BJ (cell line): ENCODE measurements at regions of chr18 and their contacts with region 1.

Region 1: GRCh38 chr18:24488824-24489493 is 28.5 kb downstream of the HRH4 start:
- DNase-seq: no peak
- H3K4me3 ChIP-seq: no peak overlapping the region
- H3K27me3 ChIP-seq: no peaks in the 10 kb centered on the region
- CTCF ChIP-seq: peak; percentile 70

Region 2: GRCh38 chr18:24176727-24177416 is 312.1 kb before region 1 on chr18:
- CTCF ChIA-PET with region 1: interaction called, 12 read pairs
- POLR2A ChIA-PET with region 1: no interaction called
- DNase-seq: no peak
- H3K4me3 ChIP-seq: no peak overlapping the region
- H3K27me3 ChIP-seq: no peaks in the 10 kb centered on the region
- CTCF ChIP-seq: peak; percentile 85

Region 3: DNA sequence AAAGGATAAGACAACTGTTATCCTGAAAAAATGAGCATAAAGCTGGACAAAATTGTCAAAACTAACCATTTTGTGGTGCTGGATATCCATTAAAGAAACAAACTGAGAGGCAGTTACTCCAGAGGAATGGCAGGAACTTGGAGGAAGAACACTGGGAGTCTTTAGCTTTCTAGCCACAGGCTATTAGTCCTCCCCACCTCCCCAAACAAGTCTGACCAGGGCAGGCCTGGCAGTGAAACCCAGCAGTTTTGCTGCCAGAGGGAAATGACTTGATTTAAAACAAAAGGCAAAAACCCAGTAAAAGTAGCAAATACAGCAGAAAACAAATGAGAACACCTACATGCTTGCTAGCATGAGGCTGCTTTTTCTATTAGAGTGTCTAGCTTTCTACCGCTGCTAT is 126.2 kb before region 1 on chr18:
- CTCF ChIA-PET with region 1: interaction called, 89 read pairs
- POLR2A ChIA-PET with region 1: no interaction called
- DNase-seq: no peak
- H3K4me3 ChIP-seq: no peak overlapping the region
- H3K27me3 ChIP-seq: no peaks in the 10 kb centered on the region
- CTCF ChIP-seq: no peak

Region 4: GRCh38 chr18:24460388-24460787 is 28.6 kb before region 1 on chr18 and contains the start of gene HRH4:
- CTCF ChIA-PET with region 1: interaction called, 11 read pairs
- POLR2A ChIA-PET with region 1: no interaction called
- DNase-seq: no peak
- H3K4me3 ChIP-seq: no peak within 1 kb of the TSS
- H3K27me3 ChIP-seq: no peaks in the 10 kb centered on the region
- CTCF ChIP-seq: no peak
- polyA plus RNA-seq, gene HRH4: 0.05 TPM in 1 of 2 replicates, not detected in the other

Region 5: DNA sequence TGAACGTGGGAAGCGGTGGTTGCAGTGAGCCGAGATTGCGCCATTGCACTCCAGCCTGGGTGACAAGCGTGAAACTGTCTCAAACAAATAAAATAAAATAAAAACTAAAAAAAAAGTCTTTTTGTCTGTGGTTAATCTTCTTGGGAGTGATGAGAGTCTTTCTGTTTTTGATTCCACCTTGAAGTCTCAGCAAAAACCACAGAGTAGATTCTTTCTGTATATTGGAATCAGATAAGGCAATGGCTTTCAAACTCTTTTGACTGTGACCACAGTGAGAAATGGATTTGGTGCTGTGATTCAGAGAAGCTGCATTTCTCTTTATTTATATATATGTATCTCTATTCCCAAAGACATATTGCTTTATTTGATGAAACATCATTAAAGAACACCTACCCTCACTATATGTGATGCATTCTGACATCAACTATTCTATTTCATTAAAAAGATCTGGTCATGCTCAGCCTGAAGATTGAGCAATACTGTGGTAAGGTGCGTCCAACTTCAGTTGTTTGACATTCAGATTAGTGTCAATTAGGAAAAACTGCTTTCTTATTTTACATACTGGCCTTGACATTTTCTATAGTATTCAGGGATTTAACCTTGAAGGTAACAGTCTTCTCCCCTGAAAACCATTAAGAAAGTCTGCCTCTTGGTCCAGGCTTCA is 12.9 kb before region 1 on chr18:
- CTCF ChIA-PET with region 1: interaction called, 10 read pairs
- POLR2A ChIA-PET with region 1: interaction called, 4 read pairs
- DNase-seq: no peak
- H3K4me3 ChIP-seq: no peak overlapping the region
- H3K27me3 ChIP-seq: no peaks in the 10 kb centered on the region
- CTCF ChIP-seq: no peak

Region 6: GRCh38 chr18:24731981-24732380 is 243.0 kb after region 1 on chr18:
- CTCF ChIA-PET with region 1: interaction called, 25 read pairs
- POLR2A ChIA-PET with region 1: no interaction called
- DNase-seq: no peak
- H3K4me3 ChIP-seq: no peak overlapping the region
- H3K27me3 ChIP-seq: peaks cover 13% of the 10 kb centered on the region
- CTCF ChIP-seq: no peak